PC-9 (cell line): ENCODE measurements at regions of chr7 and their contacts with region 1.

Region 1: DNA sequence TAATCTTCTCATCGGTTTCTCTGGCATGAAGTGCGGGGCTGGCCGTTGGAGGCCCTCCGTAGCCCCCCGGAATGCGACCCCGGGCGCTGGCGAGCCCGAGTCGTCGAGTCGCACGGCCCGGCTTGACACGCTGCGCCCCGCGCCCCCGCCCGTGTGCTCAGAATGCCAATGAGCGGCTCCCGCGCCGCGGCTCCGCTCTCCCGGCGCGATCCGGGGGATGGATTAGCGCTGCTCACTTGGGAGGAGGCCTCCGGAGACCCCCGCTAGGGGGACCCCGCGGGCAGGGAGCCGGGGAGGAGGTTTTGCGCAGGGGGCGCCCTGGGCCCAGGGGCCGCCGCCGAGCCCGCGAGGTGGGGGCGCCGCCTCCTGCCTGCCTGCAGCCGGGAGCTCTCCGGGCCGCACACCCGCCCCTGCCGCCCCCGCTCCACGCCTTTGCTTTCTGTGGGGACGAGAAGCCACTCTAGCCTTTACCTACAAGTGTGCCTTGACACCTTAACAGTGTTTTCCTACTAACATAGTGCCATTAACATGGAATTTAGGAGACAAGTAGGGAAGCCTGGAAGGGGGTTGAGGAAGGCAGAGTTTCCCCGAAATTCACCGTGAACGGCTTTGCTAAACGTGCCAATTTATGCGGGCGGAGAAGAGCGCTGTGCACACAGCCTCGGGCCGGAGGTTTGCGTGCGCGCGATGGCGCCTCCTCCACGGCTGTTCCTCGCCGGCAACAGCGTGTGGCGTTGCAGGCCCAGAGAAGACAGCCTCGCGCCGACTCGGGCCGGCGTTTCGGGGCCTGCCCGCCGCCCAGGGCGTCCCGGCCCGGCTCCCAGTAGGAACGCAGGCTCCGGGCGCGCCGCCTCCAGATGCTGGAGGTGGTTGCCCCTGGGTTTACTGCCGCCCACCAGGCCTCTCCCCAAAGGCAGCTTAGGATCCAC is 7.1 kb downstream of the SHH start:
- DNase-seq: peak in 1 of 2 experiments; percentile 78
- H3K4me3 ChIP-seq: peak overlapping the region; percentile 48; the same call in 1 of the 2 replicates
- H3K27ac ChIP-seq: no peak overlapping the region
- H3K4me1 ChIP-seq: no peaks in the 10 kb centered on the region
- H3K27me3 ChIP-seq: peaks cover 19% of the 10 kb centered on the region; the same call in 1 of the 2 replicates
- CTCF ChIP-seq: peak; percentile 87

Region 2: DNA sequence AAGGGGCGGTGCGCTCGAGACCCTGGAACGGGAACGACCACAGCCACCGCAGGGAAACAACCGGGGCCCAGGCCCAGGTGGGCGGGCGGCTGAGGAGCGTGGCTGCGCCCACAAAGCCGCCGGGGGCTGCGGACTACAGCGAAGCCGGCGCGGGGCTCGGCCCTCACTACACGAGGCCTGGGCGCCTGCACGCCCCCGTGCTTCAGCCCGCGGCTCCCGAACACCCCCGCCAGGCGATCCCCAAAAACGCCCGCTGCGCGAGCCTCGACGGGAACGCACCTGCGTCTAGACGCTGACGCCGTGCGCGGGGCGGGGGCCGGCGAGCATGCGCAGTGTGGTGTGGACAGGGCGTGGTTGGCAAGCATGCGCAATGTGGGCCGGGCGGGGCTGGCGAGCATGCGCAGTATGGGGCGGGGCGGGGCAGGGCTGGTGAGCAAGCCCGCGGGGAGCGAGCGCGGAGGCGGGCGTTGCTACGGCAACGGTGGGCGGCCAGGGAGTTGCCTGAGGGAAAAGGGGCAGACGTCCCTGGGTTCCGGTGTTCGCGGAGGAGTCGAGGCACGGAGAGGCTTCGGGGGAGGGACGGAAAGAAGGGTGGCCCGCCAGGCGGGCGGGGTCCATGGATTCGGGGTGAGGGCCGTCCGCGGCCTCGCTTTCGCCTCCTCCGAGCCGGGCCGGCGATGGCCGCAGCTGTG is 835.2 kb after region 1 on chr7 and contains the start of gene RNF32:
- CTCF ChIA-PET with region 1: no interaction called
- POLR2A ChIA-PET with region 1: no interaction called
- intact Hi-C with region 1: loop called (anchors 10 kb)
- DNase-seq: peak; percentile 78 to 96
- H3K4me3 ChIP-seq: peak within 1 kb of the TSS; percentile 90
- H3K27ac ChIP-seq: no peak within 1 kb of the TSS
- H3K4me1 ChIP-seq: peaks cover 8% of the 10 kb centered on the region
- H3K27me3 ChIP-seq: peaks cover 2% of the 10 kb centered on the region; the same call in 1 of the 2 replicates
- CTCF ChIP-seq: no peak
- total RNA-seq, gene RNF32: 2.2 and 2.7 TPM in 2 replicates

Region 3: GRCh38 chr7:156949541-156950380 is 1144.6 kb after region 1 on chr7 and contains the start of gene NOM1:
- CTCF ChIA-PET with region 1: no interaction called
- POLR2A ChIA-PET with region 1: no interaction called
- intact Hi-C with region 1: loop called (anchors 5 kb)
- DNase-seq: peak; percentile 75 to 91
- H3K4me3 ChIP-seq: peak within 1 kb of the TSS; percentile 90
- H3K27ac ChIP-seq: peak within 1 kb of the TSS; percentile 30; the same call in 1 of the 2 replicates
- H3K4me1 ChIP-seq: peaks cover 16% of the 10 kb centered on the region
- H3K27me3 ChIP-seq: peaks cover 16% of the 10 kb centered on the region; the same call in 1 of the 2 replicates
- CTCF ChIP-seq: peak; percentile 71
- total RNA-seq, gene NOM1: 25.4 and 28.3 TPM in 2 replicates

Region 4: DNA sequence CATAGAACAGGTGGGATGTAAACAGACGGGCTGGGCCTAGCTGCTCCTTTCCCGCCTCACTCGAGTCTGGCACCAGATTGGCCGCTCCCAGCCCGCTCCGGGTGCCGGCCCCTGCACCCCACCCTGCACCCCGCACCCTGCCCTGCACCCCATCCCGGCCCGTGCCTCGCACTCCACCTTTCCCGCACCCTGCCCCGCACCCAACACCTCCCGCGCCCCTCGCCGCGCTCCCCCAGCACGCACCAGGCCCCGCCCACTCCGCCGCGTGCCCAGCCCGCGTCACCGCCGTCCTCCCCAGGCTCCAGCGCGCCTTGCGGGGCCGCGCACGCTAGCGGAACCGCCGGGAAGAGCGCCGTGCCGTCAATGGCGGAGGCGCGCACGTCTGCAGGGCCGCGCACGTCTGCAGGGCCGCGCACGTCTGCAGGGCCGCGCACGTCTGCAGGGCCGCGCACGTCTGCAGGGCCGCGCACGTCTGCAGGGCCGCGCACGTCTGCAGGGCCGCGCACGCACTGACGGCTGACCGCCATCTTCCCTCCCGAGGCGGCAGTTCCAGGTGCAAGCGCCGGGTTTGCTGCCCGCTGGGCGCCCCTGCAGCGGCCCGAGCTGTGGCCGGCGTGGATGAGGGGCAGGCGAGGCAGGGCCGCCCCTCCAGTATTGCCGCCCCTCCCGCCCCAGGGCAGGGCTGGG is 1333.4 kb after region 1 on chr7 and contains the start of gene UBE3C:
- CTCF ChIA-PET with region 1: no interaction called
- POLR2A ChIA-PET with region 1: no interaction called
- intact Hi-C with region 1: loop called (anchors 10 kb)
- DNase-seq: peak; percentile 80 to 93
- H3K4me3 ChIP-seq: peak within 1 kb of the TSS; percentile 76
- H3K27ac ChIP-seq: peak within 1 kb of the TSS; percentile 88
- H3K4me1 ChIP-seq: peaks cover 31% of the 10 kb centered on the region
- H3K27me3 ChIP-seq: no peaks in the 10 kb centered on the region
- CTCF ChIP-seq: no peak
- total RNA-seq, gene UBE3C: 71.0 and 77.6 TPM in 2 replicates